ENCODE measurements at regions of chr9 and their contacts with region 1.

Region 1: DNA sequence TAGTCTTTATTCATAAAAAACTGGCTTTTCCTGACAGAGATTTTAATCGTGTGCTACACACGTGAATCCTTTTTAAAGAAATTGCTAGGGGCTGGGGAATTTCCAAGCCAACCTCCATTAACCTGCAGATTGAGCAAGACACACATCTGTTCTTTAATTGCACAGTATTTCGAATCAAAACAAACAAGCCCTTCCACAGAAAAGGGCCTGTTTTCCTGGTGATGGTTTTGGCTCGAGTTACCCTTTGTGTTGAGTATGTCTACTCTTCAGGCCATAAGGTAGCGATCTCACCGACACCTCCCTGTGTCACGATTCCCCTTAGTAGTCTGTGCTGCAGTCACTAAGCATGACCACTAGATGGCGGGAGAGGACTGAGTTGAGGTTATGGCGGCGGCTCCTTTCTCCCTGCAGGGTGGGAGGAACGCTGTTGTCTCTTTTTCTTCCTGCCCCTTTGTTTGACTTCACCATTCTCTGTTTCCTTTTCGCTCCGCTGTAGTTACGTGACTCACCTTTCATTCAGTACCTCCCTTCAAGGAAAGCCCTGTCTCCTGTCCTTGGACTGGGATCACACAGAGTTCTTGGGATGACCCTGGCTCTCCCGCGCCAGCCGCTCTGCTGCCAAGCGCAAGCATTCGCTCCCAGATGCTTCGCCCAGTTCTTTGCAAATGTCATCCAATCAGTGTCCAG is 137.1 kb upstream of the SLC24A2 start:
- DNase-seq: peak; percentile 60 to 84
- H3K4me3 ChIP-seq: no peak overlapping the region; the same call in 1 of the 2 replicates
- H3K4me1 ChIP-seq: no peaks in the 10 kb centered on the region
- H3K27me3 ChIP-seq: peaks cover 5% of the 10 kb centered on the region; the same call in 1 of the 2 replicates

Region 2: DNA sequence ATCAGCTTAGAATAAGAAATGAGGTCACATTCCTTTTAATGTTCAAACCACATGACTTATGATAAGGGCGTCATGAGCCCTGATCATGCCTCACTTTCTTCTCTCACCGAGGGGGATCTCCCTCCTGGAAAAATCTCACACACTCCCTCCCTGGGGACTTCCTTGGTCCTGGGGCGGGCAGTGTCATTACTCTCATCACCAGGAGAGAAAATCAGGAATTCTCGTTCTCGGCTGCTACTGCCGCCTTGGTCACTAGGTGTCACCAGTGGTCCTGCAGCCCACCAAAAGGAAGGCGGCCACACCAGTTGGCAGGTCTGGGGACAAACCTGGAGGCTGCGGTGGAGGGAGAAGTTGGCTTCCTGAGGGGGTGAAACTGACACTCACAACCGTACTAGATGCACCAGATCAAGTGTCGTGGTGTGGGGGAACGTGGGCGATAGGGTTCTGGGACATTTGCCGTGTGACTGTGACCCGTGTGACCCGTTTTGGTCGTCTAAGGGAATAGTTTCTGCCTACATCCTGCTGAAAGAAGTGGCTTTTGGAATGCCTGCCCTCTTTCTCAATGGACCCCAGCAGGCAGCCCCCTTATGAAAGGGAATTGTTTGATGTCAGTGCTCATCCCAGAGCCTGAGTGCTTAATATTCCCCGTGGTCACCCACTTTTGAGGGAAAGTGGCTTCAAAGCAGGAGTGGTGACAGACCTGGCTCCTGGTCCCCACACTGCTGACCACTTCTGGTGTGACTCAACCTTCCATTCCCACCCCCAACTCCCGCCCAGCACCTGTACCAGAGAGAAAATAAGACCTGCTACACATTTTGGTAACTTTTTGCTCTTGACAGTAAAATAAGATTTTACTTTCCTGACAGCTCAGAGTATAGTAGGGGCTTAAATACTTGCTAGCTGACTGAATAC is 454.0 kb before region 1 on chr9:
- in situ Hi-C with region 1: loop called (anchors 10 kb)
- DNase-seq: peak; percentile 47 to 80
- H3K4me3 ChIP-seq: no peak overlapping the region
- H3K4me1 ChIP-seq: no peaks in the 10 kb centered on the region
- H3K27me3 ChIP-seq: peaks cover 31% of the 10 kb centered on the region

Region 3: GRCh38 chr9:21110708-21111576 is 1185.0 kb after region 1 on chr9:
- in situ Hi-C with region 1: loop called (anchors 25 kb)
- DNase-seq: peak; percentile 36 to 75
- H3K4me3 ChIP-seq: no peak overlapping the region
- H3K4me1 ChIP-seq: no peaks in the 10 kb centered on the region
- H3K27me3 ChIP-seq: no peaks in the 10 kb centered on the region